Breast epithelium (tissue), 4 donors: ENCODE measurements at regions of chr2 and their contacts with region 1.

Region 1: DNA sequence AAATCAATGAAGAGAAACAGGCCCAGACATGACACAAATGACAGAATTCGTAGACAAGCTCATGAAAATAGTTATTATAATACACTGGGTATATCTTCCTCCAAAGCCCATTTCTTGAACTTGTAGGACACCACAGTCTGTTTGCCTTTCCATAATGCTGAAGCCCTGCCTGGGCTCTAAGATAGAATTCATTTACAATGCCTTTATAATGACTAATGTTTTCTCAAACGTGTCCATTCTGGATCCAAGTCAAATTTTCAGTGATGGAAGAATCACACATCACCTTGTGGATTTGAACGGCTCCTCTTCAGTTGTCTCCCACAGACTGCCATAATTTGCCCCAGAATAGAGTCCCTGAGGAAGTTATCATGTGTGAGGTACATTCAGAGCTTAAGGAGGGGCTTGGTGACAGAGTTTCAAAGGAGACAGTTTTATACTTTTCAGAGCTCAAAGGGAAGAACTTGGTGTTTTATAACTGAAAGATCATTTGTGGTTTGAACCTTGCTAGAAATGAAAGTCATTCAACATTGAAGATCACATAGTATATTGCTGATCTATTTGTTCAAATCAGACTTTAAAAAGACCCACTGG is 38.2 kb downstream of the CASP8 start:
- DNase-seq: no peak
- H3K4me3 ChIP-seq: no peak overlapping the region
- H3K27ac ChIP-seq: no peak overlapping the region
- H3K4me1 ChIP-seq: no peaks in the 10 kb centered on the region
- H3K27me3 ChIP-seq: no peaks in the 10 kb centered on the region
- CTCF ChIP-seq: no peak
- POLR2A ChIP-seq: no peak

Region 2: DNA sequence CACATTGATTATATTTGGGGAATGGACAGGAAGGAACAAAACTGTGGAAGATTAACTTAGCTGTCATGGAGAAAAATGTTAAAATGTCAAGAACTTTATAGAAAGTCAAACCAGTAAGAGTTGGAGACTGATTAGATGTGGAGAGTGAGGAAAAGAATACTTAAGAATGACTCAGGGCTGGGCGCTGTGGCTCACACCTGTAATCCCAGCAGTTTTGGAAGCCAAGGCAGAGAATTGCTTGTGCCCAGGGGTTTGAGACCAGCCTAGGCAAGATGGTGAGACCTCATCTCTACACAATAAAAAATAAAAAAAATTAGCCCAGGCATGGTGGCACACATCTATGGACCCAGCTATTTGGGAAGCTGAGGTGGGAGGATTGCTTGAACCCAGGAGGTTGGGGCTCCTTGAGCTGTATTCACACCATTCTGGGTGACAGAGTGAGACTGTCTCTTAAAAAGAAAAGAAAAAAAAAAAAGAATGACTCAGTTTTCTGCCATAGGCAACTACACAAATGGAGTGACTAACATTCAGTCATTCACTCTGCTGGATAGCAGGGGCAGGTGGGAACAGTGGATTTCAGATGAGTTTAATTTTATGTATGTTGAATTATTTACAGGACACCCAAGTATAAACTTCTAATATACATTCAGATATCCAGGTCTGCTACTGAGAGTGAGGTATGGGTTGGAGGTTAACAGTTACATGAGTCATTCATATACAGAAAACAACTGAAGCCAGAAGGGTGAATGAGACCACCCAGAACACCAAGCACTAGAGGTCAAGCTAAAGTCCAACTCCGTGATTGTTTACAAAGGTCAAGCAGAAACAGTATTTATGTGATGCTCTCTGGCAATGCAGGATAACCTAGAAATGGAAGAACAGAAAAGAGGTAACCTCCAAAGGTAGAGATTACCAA is 369.0 kb before region 1 on chr2:
- intact Hi-C with region 1: loop called (anchors 5 kb)
- DNase-seq: no peak
- H3K4me3 ChIP-seq: no peak overlapping the region
- H3K27ac ChIP-seq: no peak overlapping the region
- H3K4me1 ChIP-seq: no peaks in the 10 kb centered on the region
- H3K27me3 ChIP-seq: no peaks in the 10 kb centered on the region
- CTCF ChIP-seq: no peak
- POLR2A ChIP-seq: no peak